ENCODE measurements at regions of chr10 and their contacts with region 1.

Region 1: DNA sequence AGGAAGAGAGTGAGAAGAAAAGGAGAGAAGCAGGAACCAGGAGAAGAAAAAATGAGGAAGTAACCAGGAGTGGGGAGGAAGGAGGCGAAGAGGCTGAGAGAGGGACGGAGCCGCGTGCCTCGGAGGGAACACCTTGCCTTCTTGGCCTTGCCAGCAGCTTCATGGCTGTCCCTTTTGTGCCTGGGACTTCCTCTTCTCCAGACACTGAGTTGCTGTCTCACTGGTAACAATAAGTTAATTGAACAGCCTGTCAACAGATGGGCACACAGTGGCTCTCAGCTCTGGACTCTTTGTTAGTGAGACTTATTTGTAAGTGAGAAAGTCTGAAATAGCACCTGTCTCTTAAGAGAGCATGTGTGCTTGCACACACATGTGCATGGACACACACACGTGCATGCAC is 83.2 kb downstream of the GATA3 start:
- DNase-seq: peak in 1 of 9 donors; percentile 25
- ATAC-seq: peak; percentile 40
- H3K4me3 ChIP-seq: peak overlapping the region; percentile 63
- H3K4me3 Mint-ChIP-seq: peak overlapping the region; percentile 84 to 95 (median 88)
- H3K27ac ChIP-seq: peak overlapping the region; percentile 72
- H3K27ac Mint-ChIP-seq: peak overlapping the region; percentile 86 to 98 (median 93)
- H3K4me1 ChIP-seq: peaks cover 3 to 18% of the 10 kb centered on the region in 2 donors
- H3K4me1 Mint-ChIP-seq: peaks cover 24 to 65% (median 39%) of the 10 kb centered on the region in 7 donors
- H3K27me3 ChIP-seq: no peaks in the 10 kb centered on the region
- H3K27me3 Mint-ChIP-seq: peaks cover 0 to 14% (median 10%) of the 10 kb centered on the region in 5 donors

Region 2: DNA sequence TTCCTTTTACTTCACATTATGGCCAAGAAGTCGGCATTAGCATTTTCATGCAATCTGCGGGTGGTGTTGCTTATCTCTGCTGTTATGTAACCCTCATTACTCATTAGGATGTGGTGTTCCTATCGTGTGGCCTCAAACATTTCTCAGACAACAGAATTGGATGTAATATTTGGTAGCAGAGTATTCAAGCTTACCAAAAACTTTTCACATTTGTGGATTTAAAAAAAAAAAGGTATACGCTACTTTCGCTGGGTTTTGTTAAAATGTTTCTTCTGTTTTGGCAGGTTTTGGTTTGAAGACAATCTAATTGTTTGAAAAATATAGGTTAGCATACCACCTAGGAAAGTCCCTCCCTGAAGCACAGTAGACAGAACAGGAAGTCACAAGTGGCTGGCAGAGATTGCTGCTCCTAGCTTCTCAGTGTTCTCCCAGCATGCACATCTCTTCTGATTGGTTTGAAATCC is 45.5 kb after region 1 on chr10:
- CTCF ChIA-PET with region 1: no interaction called
- POLR2A ChIA-PET with region 1: interaction called, 4 read pairs
- intact Hi-C with region 1: loop called (anchors 1 to 2 kb)
- DNase-seq: peak in 7 of 9 donors; percentile 38 to 67 (median 57)
- ATAC-seq: peak; percentile 95
- H3K4me3 ChIP-seq: no peak overlapping the region
- H3K4me3 Mint-ChIP-seq: peak overlapping the region; percentile 14 to 82 (median 56)
- H3K27ac ChIP-seq: peak overlapping the region; percentile 44
- H3K27ac Mint-ChIP-seq: peak overlapping the region; percentile 4 to 90 (median 80)
- H3K4me1 ChIP-seq: peaks cover 14 to 20% of the 10 kb centered on the region in 2 donors
- H3K4me1 Mint-ChIP-seq: peaks cover 18 to 42% (median 37%) of the 10 kb centered on the region in 7 donors
- H3K27me3 ChIP-seq: no peaks in the 10 kb centered on the region
- H3K27me3 Mint-ChIP-seq: peaks cover 0 to 20% (median 4%) of the 10 kb centered on the region in 5 donors

Region 3: DNA sequence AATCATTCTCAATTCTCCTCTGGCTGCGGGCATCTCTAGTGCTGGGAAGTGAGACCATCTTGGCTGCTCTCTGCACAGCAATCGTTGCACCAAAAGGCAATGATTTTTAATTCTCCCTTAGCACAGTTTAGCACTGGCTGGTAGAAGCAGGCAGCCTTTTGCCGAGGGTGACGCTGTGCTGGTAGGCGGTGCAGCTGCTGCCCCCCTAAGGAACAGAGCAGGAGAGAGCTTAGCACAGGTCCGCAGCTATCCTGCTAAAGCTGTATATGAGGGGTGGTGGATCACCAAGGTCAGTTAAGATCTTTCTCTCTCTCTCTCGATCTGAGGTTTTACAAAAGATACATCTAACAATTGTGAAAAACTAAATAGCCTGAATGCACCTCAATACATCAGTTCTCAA is 306.9 kb after region 1 on chr10:
- CTCF ChIA-PET with region 1: no interaction called
- POLR2A ChIA-PET with region 1: no interaction called
- intact Hi-C with region 1: loop called in 1 of 2 experiments (anchors 1 kb)
- DNase-seq: peak in 8 of 9 donors; percentile 14 to 63 (median 44)
- ATAC-seq: peak; percentile 94
- H3K4me3 ChIP-seq: no peak overlapping the region
- H3K4me3 Mint-ChIP-seq: no peak overlapping the region
- H3K27ac ChIP-seq: no peak overlapping the region
- H3K27ac Mint-ChIP-seq: peak overlapping the region in 3 of 9 donors; percentile 23 to 70 (median 65)
- H3K4me1 ChIP-seq: peaks cover 0 to 6% of the 10 kb centered on the region in 2 donors
- H3K4me1 Mint-ChIP-seq: peaks cover 0 to 17% (median 5%) of the 10 kb centered on the region in 7 donors
- H3K27me3 ChIP-seq: peaks cover 0 to 2% of the 10 kb centered on the region in 2 donors
- H3K27me3 Mint-ChIP-seq: peaks cover 0 to 36% (median 0%) of the 10 kb centered on the region in 5 donors

Region 4: DNA sequence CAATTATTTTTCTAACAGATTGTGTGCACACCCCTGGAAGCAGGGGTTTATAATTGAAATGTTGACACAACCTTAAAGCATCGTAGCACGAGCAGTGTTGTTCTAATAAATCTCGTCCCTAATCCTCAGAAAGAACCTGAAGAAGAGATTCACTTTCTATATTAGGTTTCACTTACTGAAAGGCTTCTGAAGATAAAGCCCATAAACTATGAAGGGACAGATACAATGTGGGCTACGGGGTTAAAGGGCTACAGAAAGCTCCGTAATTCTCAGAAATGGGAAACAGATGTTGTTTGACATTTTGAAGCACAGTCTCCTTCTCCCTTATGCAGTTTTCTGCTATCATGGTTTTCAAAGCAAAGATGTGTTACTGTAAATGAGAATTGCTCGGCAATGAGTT is 396.4 kb after region 1 on chr10:
- CTCF ChIA-PET with region 1: no interaction called
- POLR2A ChIA-PET with region 1: no interaction called
- intact Hi-C with region 1: no loop called
- DNase-seq: no peak
- ATAC-seq: no peak
- H3K4me3 ChIP-seq: no peak overlapping the region
- H3K4me3 Mint-ChIP-seq: no peak overlapping the region
- H3K27ac ChIP-seq: no peak overlapping the region
- H3K27ac Mint-ChIP-seq: no peak overlapping the region
- H3K4me1 ChIP-seq: no peaks in the 10 kb centered on the region
- H3K4me1 Mint-ChIP-seq: peaks cover 0 to 2% (median 0%) of the 10 kb centered on the region in 7 donors
- H3K27me3 ChIP-seq: no peaks in the 10 kb centered on the region
- H3K27me3 Mint-ChIP-seq: peaks cover 3 to 7% (median 4%) of the 10 kb centered on the region in 5 donors